CD4-positive, alpha-beta memory T cell (primary cell): ENCODE measurements at regions of chr19 and their contacts with region 1.

Region 1: GRCh38 chr19:12965017-12965811 is 4.2 kb upstream of the DAND5 start:
- DNase-seq: peak; percentile 74 to 83 (median 77)
- H3K4me3 ChIP-seq: peak overlapping the region; percentile 61 to 65
- H3K4me3 Mint-ChIP-seq: peak overlapping the region; percentile 87 to 96 (median 92)
- H3K27ac ChIP-seq: peak overlapping the region; percentile 50
- H3K27ac Mint-ChIP-seq: peak overlapping the region; percentile 38 to 92 (median 74)
- H3K4me1 ChIP-seq: peaks cover 4% of the 10 kb centered on the region
- H3K4me1 Mint-ChIP-seq: peaks cover 5 to 10% (median 6%) of the 10 kb centered on the region in 4 donors
- H3K27me3 ChIP-seq: no peaks in the 10 kb centered on the region
- H3K27me3 Mint-ChIP-seq: no peaks in the 10 kb centered on the region

Region 2: DNA sequence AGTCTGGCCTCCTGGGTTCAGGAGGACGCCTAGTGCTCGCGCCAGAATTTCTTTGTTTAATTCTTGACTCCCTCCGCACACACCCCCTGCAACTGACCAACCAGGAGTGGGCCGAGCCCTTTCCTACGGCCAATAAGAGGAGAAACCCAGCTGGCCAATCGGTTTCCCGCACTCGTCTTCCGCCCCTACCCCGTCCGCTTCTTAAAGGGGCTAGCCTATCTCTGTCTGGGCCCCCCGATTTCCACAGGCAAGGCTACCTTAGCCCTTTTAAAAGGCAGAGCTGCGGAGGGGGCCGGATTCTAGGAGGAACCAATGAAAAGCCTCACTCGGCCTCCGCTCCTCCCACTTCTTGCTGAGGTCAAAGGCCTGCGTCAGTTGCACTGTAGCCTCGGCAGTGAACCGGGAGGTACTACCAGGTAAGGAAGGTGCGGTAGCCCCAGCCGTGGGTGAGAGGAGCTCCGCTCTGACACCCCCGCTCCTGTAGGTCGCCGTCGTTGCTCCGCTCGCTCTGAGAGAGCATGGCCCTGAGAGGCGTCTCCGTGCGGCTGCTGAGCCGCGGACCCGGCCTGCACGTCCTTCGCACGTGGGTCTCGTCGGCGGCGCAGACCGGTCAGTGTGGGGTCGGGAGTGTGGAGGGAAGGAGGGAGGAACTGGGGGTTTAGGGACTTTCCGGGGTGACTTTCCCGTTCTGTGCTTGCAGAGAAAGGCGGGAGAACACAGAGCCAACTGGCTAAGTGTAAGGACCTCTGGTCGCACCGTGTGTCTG is 74.2 kb before region 1 on chr19 and contains the start of gene GCDH:
- CTCF ChIA-PET with region 1: interaction called, 166 read pairs
- POLR2A ChIA-PET with region 1: interaction called, 31 read pairs
- intact Hi-C with region 1: loop called (anchors 1 kb)
- DNase-seq: peak; percentile 96 to 99 (median 97)
- H3K4me3 ChIP-seq: peak within 1 kb of the TSS; percentile 84 to 88
- H3K4me3 Mint-ChIP-seq: peak within 1 kb of the TSS; percentile 97 to 99 (median 99)
- H3K27ac ChIP-seq: peak within 1 kb of the TSS; percentile 69
- H3K27ac Mint-ChIP-seq: peak within 1 kb of the TSS; percentile 93 to 99 (median 97)
- H3K4me1 ChIP-seq: peaks cover 22% of the 10 kb centered on the region
- H3K4me1 Mint-ChIP-seq: peaks cover 14 to 37% (median 25%) of the 10 kb centered on the region in 4 donors
- H3K27me3 ChIP-seq: no peaks in the 10 kb centered on the region
- H3K27me3 Mint-ChIP-seq: no peaks in the 10 kb centered on the region
- total RNA-seq, gene GCDH: 63.9 to 66.1 TPM

Region 3: GRCh38 chr19:12938234-12939025 is 26.8 kb before region 1 on chr19 and contains the start of gene CALR:
- CTCF ChIA-PET with region 1: interaction called, 6 read pairs
- POLR2A ChIA-PET with region 1: interaction called, 9 read pairs
- intact Hi-C with region 1: loop called (anchors 1 kb)
- DNase-seq: peak; percentile 99 to 100 (median 99)
- H3K4me3 ChIP-seq: peak within 1 kb of the TSS; percentile 49 to 97
- H3K4me3 Mint-ChIP-seq: peak within 1 kb of the TSS; percentile 94 to 99 (median 98)
- H3K27ac ChIP-seq: peak within 1 kb of the TSS; percentile 90
- H3K27ac Mint-ChIP-seq: peak within 1 kb of the TSS; percentile 96 to 99 (median 98)
- H3K4me1 ChIP-seq: peaks cover 39% of the 10 kb centered on the region
- H3K4me1 Mint-ChIP-seq: peaks cover 20 to 58% (median 38%) of the 10 kb centered on the region in 4 donors
- H3K27me3 ChIP-seq: no peaks in the 10 kb centered on the region
- H3K27me3 Mint-ChIP-seq: no peaks in the 10 kb centered on the region
- total RNA-seq, gene CALR: 484 to 499 TPM

Region 4: DNA sequence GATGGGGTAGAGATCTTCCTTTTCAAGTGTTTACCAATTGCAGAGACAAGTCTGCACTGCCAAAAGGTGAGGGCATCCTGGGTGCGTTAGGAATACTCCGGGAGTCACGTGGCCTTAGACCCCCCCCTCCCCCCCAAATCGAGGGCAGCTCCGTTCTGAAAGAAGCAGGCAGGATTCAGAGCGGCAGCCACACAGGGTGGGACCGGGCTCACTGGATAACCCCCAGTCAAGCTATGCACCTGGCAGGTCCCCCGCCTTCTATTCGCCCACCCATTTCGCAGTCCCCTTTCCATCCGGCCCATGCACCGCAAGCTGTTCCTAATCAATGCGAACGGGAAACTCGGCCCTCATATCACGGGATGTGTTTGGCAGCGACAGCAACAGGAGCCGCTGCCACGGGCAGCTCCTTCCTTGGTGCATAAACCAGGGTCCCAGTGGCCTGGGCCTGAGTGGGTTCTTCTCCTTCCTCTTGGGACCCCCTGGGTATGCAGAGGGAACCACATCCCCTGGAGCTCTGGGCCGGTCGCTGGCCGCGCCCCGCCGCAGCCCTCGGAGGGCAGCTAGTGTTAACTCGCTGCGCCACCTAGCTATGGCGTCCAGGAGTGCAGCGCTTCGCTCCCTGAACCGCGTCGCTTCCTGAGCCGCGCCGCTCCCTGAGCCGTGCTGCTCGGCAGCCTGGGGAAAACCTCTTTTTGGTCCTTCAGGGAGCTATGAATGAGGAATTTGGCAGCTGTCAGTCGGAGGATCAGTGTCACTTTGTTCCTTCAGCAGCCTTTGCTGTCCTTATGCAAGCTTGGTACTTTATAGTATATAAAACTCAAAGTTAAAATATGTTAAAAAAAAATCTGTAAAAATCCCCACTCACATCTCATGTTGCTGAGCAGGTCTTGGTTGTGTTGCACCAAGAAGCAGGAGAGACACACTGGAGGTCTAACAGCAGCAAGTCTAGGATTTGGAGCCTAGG is 96.0 kb after region 1 on chr19:
- CTCF ChIA-PET with region 1: interaction called, 42 read pairs
- POLR2A ChIA-PET with region 1: interaction called, 7 read pairs
- intact Hi-C with region 1: no loop called
- DNase-seq: peak; percentile 63 to 68 (median 64)
- H3K4me3 ChIP-seq: peak overlapping the region; percentile 25 to 64
- H3K4me3 Mint-ChIP-seq: peak overlapping the region; percentile 76 to 88 (median 84)
- H3K27ac ChIP-seq: no peak overlapping the region
- H3K27ac Mint-ChIP-seq: peak overlapping the region in 2 of 7 donors; percentile 27 to 29
- H3K4me1 ChIP-seq: peaks cover 15% of the 10 kb centered on the region
- H3K4me1 Mint-ChIP-seq: peaks cover 3 to 10% (median 6%) of the 10 kb centered on the region in 4 donors
- H3K27me3 ChIP-seq: peaks cover 11% of the 10 kb centered on the region
- H3K27me3 Mint-ChIP-seq: peaks cover 1 to 17% of the 10 kb centered on the region in 2 donors

Region 5: GRCh38 chr19:13104360-13104847 is 139.2 kb after region 1 on chr19:
- CTCF ChIA-PET with region 1: interaction called, 13 read pairs
- POLR2A ChIA-PET with region 1: interaction called, 4 read pairs
- intact Hi-C with region 1: no loop called
- DNase-seq: peak; percentile 50 to 74 (median 60)
- H3K4me3 ChIP-seq: peak overlapping the region; percentile 65 to 73
- H3K4me3 Mint-ChIP-seq: peak overlapping the region; percentile 87 to 97 (median 92)
- H3K27ac ChIP-seq: peak overlapping the region; percentile 48
- H3K27ac Mint-ChIP-seq: peak overlapping the region; percentile 83 to 94 (median 93)
- H3K4me1 ChIP-seq: peaks cover 63% of the 10 kb centered on the region
- H3K4me1 Mint-ChIP-seq: peaks cover 18 to 49% (median 32%) of the 10 kb centered on the region in 4 donors
- H3K27me3 ChIP-seq: no peaks in the 10 kb centered on the region
- H3K27me3 Mint-ChIP-seq: no peaks in the 10 kb centered on the region